ENCODE measurements at regions of chr6 and their contacts with region 1.

Region 1: DNA sequence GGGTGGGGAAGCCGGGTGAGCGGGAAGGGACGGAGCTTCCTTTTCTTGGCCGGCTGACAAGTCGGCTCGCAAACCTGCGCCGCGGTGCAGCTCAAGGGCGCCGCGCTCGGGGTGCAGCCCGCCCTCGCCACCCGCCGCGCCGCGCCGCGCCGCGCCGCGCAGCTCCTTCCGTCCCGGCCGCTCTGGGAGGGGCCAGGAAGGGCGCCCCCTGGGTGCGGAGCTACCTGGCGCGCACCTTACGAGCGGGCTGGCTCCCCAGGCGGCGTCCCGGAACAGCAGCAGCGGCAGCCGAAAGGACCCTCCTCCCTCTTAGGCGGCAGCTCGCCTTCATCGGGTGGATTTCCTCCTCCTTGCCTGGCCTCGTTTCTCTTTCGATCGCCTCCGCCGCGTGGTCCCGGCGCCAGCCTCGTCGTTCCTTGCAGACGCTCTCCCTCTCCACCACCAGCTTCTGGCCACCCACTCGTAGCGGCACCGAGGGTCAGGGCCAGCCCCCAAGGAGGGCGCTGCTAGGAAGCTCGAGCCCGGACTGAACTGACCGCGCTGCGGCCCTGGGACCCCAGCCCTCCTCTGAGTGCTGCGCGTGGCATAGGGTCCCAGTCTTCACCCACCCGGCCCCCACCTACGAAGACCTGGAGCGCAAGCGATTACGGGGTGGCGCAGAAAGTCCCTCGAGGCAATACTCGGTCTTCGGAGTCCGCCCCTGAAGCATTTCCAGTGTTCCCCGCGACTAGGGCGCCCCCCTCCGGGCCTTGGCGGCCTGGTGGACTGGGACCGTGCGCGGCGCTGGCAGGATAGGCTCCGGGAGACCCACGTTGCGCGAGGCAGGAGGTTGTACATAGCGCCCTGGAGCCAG is at the start of gene MAP3K5:
- DNase-seq: peak; percentile 95
- H3K4me3 Mint-ChIP-seq: peak within 1 kb of the TSS; percentile 90
- H3K27ac Mint-ChIP-seq: peak within 1 kb of the TSS; percentile 96
- H3K4me1 Mint-ChIP-seq: peaks cover 34% of the 10 kb centered on the region
- H3K27me3 Mint-ChIP-seq: peaks cover 3% of the 10 kb centered on the region

Region 2: DNA sequence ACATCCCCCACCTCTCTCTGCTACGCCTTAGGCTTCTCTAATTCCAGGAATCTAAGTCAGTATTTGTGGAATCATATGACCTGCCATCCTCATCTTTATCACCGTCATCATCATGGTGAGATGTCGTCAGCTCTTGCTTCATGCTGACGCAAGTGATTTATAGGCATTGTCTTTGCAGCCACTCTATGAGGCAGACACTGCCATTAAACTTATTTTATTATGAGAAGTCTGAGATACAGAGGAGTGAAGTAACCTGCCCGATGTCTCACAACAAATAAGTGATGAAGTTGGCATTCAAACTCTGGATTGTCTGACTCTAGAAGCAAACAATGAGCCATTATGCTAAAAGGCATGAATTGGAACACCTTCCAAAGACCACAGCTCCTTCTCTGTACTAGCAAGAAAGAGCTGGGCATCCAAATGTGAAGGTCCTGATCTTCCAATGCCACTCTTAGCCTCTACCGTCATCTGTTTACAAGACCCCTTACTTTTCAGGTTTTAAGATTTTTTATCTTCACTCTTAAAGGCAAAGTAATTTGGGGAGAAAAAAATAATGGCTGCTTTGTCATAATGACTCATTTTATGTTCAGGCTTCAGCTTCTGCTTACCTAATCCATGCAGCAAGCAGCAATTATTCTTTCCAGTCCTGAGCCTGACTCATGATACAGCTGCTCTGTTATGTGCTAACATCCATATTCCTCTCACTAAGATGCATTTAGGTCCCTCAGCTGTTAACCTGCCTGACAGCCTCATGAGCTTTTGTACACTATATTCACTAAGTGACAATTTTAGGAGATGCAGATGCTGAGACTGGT is 389.3 kb before region 1 on chr6:
- CTCF ChIA-PET with region 1: no interaction called
- DNase-seq: no peak
- H3K4me3 Mint-ChIP-seq: no peak overlapping the region
- H3K27ac Mint-ChIP-seq: no peak overlapping the region
- H3K4me1 Mint-ChIP-seq: no peaks in the 10 kb centered on the region
- H3K27me3 Mint-ChIP-seq: peaks cover 16% of the 10 kb centered on the region

Region 3: DNA sequence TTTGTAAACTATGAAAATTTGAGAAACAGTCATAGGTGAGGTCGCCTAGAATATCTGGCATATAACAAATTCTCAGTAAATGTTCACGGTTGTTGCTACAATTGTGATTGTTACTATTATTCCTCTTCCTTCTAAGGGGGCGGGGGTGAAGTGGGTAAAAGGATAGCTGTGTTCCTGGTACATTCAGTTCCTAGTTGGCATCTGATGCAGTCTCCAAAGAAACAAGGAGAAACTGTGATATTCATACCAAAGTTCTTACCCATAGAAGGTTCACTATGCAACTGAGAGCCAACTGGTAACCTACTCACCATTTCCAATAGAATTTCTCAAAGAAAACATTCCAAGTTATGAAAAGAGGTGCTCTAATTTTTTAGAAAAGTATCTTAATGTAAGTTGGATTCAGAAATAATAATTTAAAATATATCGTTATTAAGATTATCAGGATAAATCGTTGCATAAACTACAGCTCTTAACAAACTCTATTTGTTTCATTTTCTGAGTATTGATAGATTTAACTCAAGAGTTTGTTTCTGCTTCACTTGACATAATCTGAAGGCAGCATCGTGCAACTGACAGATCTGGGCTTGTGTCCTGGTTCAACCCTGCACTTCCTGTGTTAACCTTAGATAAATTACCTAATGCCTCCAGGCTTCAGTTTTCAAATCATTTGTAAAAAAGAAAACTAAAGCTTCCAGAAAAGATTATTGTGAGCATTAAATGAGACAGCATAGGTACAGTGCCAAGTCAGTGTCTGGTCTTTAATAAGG is 229.1 kb before region 1 on chr6:
- CTCF ChIA-PET with region 1: no interaction called
- DNase-seq: no peak
- H3K4me3 Mint-ChIP-seq: no peak overlapping the region
- H3K27ac Mint-ChIP-seq: no peak overlapping the region
- H3K4me1 Mint-ChIP-seq: peaks cover 7% of the 10 kb centered on the region
- H3K27me3 Mint-ChIP-seq: no peaks in the 10 kb centered on the region

Region 4: GRCh38 chr6:136607932-136608772 is 184.5 kb before region 1 on chr6:
- CTCF ChIA-PET with region 1: interaction called, 14 read pairs
- DNase-seq: peak; percentile 88
- H3K4me3 Mint-ChIP-seq: no peak overlapping the region
- H3K27ac Mint-ChIP-seq: no peak overlapping the region
- H3K4me1 Mint-ChIP-seq: peaks cover 22% of the 10 kb centered on the region
- H3K27me3 Mint-ChIP-seq: no peaks in the 10 kb centered on the region

Region 5: GRCh38 chr6:136652656-136653055 is 140.0 kb before region 1 on chr6:
- CTCF ChIA-PET with region 1: interaction called, 426 read pairs
- DNase-seq: no peak
- H3K4me3 Mint-ChIP-seq: no peak overlapping the region
- H3K27ac Mint-ChIP-seq: no peak overlapping the region
- H3K4me1 Mint-ChIP-seq: peaks cover 8% of the 10 kb centered on the region
- H3K27me3 Mint-ChIP-seq: no peaks in the 10 kb centered on the region

Region 6: DNA sequence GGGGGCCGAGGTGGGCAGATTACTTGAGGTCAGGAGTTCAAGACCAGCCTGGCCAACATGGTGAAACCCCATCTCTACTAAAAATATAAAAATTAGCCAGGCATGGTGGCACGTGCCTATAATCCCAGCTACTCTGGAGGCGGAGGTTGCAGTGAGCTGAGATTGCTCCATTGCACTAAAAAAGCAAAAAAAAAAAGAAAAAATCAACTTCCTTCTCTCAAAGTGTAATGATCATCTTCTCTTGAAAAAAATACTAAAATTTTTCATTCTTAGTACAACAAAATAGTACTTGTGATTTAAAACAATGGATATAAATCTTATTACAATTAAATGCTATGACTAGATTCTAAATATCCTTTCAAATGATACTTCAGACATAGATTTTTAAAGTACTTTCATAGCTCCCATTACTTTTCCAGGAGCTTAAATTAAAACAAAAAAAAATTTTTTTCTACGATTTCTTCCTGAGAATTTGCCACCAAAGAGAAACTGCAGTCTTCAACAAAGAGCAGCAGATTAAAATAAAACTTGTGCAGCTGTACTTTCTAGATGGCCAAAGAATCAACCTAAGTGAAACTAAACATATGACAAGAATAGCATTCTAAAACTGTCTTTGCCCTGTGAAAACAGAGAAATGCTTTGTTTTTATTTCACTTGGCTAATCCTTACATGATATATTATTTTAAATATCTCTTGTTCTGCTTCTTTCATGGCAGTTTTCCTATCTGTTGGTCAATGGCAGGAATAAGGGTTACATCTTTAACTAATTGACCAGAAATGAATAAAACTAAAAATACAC is 75.5 kb before region 1 on chr6:
- CTCF ChIA-PET with region 1: interaction called, 10 read pairs
- DNase-seq: no peak
- H3K4me3 Mint-ChIP-seq: no peak overlapping the region
- H3K27ac Mint-ChIP-seq: no peak overlapping the region
- H3K4me1 Mint-ChIP-seq: peaks cover 46% of the 10 kb centered on the region
- H3K27me3 Mint-ChIP-seq: no peaks in the 10 kb centered on the region

Region 7: GRCh38 chr6:136751522-136751956 is 41.1 kb before region 1 on chr6:
- CTCF ChIA-PET with region 1: interaction called, 28 read pairs
- DNase-seq: peak; percentile 61
- H3K4me3 Mint-ChIP-seq: peak overlapping the region; percentile 55
- H3K27ac Mint-ChIP-seq: peak overlapping the region; percentile 92
- H3K4me1 Mint-ChIP-seq: peaks cover 94% of the 10 kb centered on the region
- H3K27me3 Mint-ChIP-seq: no peaks in the 10 kb centered on the region

Region 8: GRCh38 chr6:137025786-137026456 is 233.3 kb after region 1 on chr6:
- CTCF ChIA-PET with region 1: no interaction called
- DNase-seq: no peak
- H3K4me3 Mint-ChIP-seq: no peak overlapping the region
- H3K27ac Mint-ChIP-seq: no peak overlapping the region
- H3K4me1 Mint-ChIP-seq: no peaks in the 10 kb centered on the region
- H3K27me3 Mint-ChIP-seq: peaks cover 72% of the 10 kb centered on the region